ENCODE measurements at regions of chr1 and their contacts with region 1.

Region 1: GRCh38 chr1:153705485-153705884 is 22.4 kb upstream of the INTS3 start:
- DNase-seq: no peak
- ATAC-seq: no peak
- H3K4me3 Mint-ChIP-seq: no peak overlapping the region
- H3K27ac Mint-ChIP-seq: no peak overlapping the region
- H3K4me1 Mint-ChIP-seq: no peaks in the 10 kb centered on the region
- H3K27me3 Mint-ChIP-seq: no peaks in the 10 kb centered on the region

Region 2: GRCh38 chr1:153688276-153688675 is 17.2 kb before region 1 on chr1:
- POLR2A ChIA-PET with region 1: interaction called, 11 read pairs
- DNase-seq: no peak
- ATAC-seq: no peak
- H3K4me3 Mint-ChIP-seq: no peak overlapping the region
- H3K27ac Mint-ChIP-seq: peak overlapping the region in 2 of 10 donors; percentile 40 to 57
- H3K4me1 Mint-ChIP-seq: peaks cover 7 to 21% (median 11%) of the 10 kb centered on the region in 4 donors
- H3K27me3 Mint-ChIP-seq: peaks cover 2 to 23% (median 6%) of the 10 kb centered on the region in 5 donors